ENCODE measurements at regions of chr12 and their contacts with region 1.

Region 1: GRCh38 chr12:8123124-8123912 is at the start of gene CLEC4A:
- DNase-seq: no peak
- H3K4me3 ChIP-seq: no peak within 1 kb of the TSS
- H3K27ac ChIP-seq: no peak within 1 kb of the TSS
- H3K4me1 ChIP-seq: no peaks in the 10 kb centered on the region
- H3K27me3 ChIP-seq: no peaks in the 10 kb centered on the region
- CTCF ChIP-seq: no peak
- POLR2A ChIP-seq: no peak
- total RNA-seq, gene CLEC4A: 2.5 to 3.9 (median 3.4) TPM

Region 2: GRCh38 chr12:7731486-7731885 is 391.8 kb before region 1 on chr12:
- intact Hi-C with region 1: loop called (anchors 5 kb)
- DNase-seq: no peak
- H3K4me3 ChIP-seq: no peak overlapping the region
- H3K27ac ChIP-seq: no peak overlapping the region
- H3K4me1 ChIP-seq: no peaks in the 10 kb centered on the region
- H3K27me3 ChIP-seq: peaks cover 0 to 4% of the 10 kb centered on the region in 2 donors
- CTCF ChIP-seq: no peak
- POLR2A ChIP-seq: no peak

Region 3: DNA sequence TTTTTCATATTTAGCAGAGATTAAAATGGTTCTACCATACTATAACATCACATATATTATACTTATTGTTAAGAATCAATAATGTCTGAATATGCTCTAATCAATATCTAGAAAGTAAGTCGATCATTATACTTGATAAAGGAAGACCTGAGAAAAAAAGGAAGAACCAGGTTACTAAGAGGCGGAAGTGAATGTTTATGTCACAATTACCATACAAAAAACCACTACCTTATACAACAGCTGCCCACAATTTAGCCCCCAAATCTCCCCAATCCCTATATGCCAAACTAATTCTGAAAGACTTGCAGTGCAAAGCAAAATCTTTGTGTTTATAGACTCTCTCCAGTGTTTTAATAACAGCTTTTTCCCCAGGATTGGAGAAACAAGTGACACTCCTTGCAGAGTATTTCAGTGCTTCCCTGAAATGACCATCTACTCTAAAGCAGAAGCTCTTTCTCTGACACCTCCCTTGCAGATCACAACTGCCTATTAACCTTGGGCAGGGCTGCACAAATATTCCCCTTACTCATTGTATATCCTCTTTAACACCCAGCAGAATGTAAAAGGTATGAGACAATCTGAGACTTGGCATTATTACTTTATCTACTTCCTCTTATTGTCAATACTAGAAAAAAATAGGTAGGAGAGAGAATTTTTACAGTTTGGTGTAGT is 174.6 kb before region 1 on chr12:
- intact Hi-C with region 1: no loop called
- DNase-seq: no peak
- H3K4me3 ChIP-seq: no peak overlapping the region
- H3K27ac ChIP-seq: no peak overlapping the region
- H3K4me1 ChIP-seq: no peaks in the 10 kb centered on the region
- H3K27me3 ChIP-seq: no peaks in the 10 kb centered on the region
- CTCF ChIP-seq: no peak
- POLR2A ChIP-seq: no peak

Region 4: DNA sequence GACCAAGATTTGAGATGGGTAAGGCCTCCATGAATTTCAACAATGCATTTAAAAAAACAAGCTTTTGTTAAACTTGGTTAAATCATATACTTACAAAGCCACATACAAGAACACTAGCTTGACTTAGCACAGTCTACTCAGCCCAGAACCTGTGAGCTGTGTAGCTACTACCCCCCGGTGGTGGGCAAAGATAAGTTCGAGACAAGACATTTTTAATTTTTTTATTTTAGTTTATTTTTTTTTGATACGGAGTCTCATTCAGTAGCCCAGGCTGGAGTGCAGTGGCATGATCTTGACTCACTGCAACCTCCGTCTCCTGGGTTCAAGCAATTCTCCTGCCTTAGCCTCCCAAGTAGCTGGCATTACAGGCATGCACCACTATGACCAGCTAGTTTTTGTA is 44.9 kb before region 1 on chr12:
- intact Hi-C with region 1: no loop called
- DNase-seq: no peak
- H3K4me3 ChIP-seq: no peak overlapping the region
- H3K27ac ChIP-seq: no peak overlapping the region
- H3K4me1 ChIP-seq: peaks cover 0 to 2% of the 10 kb centered on the region in 2 donors
- H3K27me3 ChIP-seq: no peaks in the 10 kb centered on the region
- CTCF ChIP-seq: no peak
- POLR2A ChIP-seq: no peak

Measured in breast epithelium (tissue), 4 donors.